ENCODE measurements at regions of chr10 and their contacts with region 1.

Region 1: GRCh38 chr10:11611248-11612020 is at the start of gene USP6NL:
- DNase-seq: peak; percentile 90
- H3K4me3 ChIP-seq: peak within 1 kb of the TSS; percentile 81
- H3K27ac ChIP-seq: peak within 1 kb of the TSS; percentile 84
- H3K4me1 ChIP-seq: peaks cover 48% of the 10 kb centered on the region
- CTCF ChIP-seq: no peak
- total RNA-seq, gene USP6NL: 33.7 and 41.7 TPM in 2 replicates

Region 2: GRCh38 chr10:11546581-11546980 is 64.9 kb before region 1 on chr10:
- CTCF ChIA-PET with region 1: no interaction called
- POLR2A ChIA-PET with region 1: interaction called, 18 read pairs
- intact Hi-C with region 1: no loop called
- DNase-seq: no peak
- H3K4me3 ChIP-seq: no peak overlapping the region
- H3K27ac ChIP-seq: no peak overlapping the region
- H3K4me1 ChIP-seq: peaks cover 44% of the 10 kb centered on the region
- CTCF ChIP-seq: no peak

Region 3: DNA sequence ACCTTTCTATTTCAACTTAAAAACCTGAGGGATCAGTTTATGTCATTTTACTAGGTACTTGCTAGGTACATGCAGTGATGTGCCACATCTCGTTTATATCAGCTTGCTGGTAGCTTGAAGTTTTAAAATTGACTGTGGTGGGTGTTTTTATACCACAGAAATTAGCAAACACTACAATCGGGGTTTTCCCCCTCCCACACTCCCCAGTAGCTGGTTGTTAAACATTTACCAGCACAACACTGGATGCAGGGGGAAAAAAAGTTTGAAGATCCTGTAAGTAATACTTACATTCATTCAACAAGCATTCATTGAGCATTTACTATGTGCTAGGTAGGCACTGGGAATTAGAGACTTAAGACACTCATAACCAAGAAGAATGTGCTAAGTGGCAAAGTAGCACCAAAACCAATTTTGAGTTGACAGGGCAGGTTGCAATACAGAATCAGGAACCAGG is 32.6 kb before region 1 on chr10:
- CTCF ChIA-PET with region 1: no interaction called
- POLR2A ChIA-PET with region 1: interaction called, 11 read pairs
- intact Hi-C with region 1: no loop called
- DNase-seq: no peak
- H3K4me3 ChIP-seq: no peak overlapping the region
- H3K27ac ChIP-seq: no peak overlapping the region
- H3K4me1 ChIP-seq: peaks cover 40% of the 10 kb centered on the region
- CTCF ChIP-seq: no peak

Region 4: GRCh38 chr10:11631890-11632587 is 20.6 kb after region 1 on chr10:
- CTCF ChIA-PET with region 1: interaction called, 3 read pairs
- POLR2A ChIA-PET with region 1: interaction called, 23 read pairs
- intact Hi-C with region 1: no loop called
- DNase-seq: peak; percentile 81
- H3K4me3 ChIP-seq: peak overlapping the region; percentile 49
- H3K27ac ChIP-seq: peak overlapping the region; percentile 75
- H3K4me1 ChIP-seq: peaks cover 43% of the 10 kb centered on the region
- CTCF ChIP-seq: no peak; the same call in 1 of the 2 replicates

Region 5: DNA sequence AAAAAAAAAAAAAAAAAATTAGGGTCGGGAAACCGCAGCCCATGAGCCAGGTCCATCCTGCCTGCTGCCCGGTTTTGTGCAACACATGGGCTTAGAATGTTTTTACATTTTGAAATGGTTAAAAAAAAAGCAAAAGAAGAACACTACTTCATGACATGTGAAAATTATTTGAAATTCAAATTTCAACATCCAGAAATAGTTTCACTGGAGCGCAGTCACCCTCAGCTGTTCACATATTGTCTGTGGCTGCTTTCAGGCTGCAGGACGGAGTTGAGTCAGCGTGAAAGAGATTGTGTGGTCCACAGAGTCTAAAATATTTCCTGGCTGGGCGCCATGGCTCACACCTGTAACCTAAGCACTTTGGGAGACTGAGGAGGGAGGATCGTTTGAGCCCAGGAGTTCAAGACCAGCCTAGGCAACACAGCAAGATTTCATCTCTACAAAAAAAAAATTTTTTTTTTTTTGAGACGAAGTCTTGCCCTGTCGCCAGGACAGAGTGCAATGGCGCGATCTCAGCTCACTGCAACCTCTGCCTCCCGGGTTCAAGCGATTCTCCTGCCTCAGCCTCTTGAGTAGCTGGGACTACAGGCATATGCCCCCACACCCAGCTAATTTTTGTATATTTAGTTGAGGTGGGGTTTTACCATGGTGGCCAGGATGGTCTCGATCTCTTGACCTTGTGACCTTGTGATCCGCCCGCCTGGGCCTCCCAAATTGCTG is 66.8 kb after region 1 on chr10:
- CTCF ChIA-PET with region 1: interaction called, 7 read pairs
- POLR2A ChIA-PET with region 1: interaction called, 77 read pairs
- intact Hi-C with region 1: loop called (anchors 1 kb)
- DNase-seq: peak; percentile 96
- H3K4me3 ChIP-seq: peak overlapping the region; percentile 41
- H3K27ac ChIP-seq: peak overlapping the region; percentile 100
- H3K4me1 ChIP-seq: peaks cover 94% of the 10 kb centered on the region
- CTCF ChIP-seq: no peak

Measured in OCI-LY7 (cell line).